OCI-LY7 (cell line): ENCODE measurements at regions of chr20 and their contacts with region 1.

Region 1: GRCh38 chr20:47677635-47678453 is 107.4 kb downstream of the SULF2 start:
- DNase-seq: peak; percentile 72
- H3K4me3 ChIP-seq: no peak overlapping the region
- H3K27ac ChIP-seq: no peak overlapping the region
- H3K4me1 ChIP-seq: no peaks in the 10 kb centered on the region
- CTCF ChIP-seq: peak; percentile 90

Region 2: GRCh38 chr20:47642624-47643023 is 35.2 kb before region 1 on chr20:
- CTCF ChIA-PET with region 1: no interaction called
- POLR2A ChIA-PET with region 1: no interaction called
- intact Hi-C with region 1: no loop called
- DNase-seq: no peak
- H3K4me3 ChIP-seq: no peak overlapping the region
- H3K27ac ChIP-seq: no peak overlapping the region
- H3K4me1 ChIP-seq: no peaks in the 10 kb centered on the region
- CTCF ChIP-seq: no peak

Region 3: DNA sequence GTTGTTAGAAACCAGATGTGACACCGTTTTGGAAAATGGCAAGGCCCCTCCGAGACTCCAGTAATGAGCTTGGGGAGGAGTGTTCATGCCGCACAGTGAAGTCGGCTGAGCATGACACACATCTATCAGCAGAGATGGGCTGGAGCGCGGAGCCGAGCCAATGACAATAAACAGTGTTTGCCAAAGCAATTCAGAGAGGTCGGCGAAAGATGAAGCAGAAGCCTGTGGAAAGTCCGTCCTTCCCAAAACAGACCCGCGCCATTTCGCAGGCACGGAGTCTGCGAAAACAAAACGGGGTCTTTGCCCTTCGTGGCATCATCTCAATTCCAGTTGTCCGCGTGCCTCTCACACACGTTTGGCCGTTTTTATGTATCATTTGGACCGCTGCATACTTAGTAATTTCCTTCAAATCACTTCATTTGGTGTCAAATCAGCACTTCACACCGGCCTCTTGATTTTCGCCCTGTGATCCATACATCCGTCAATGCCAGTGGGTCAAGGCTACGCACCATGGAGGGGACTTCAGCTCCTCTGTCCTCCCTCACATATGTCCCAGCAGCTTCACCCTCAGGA is 36.1 kb after region 1 on chr20:
- CTCF ChIA-PET with region 1: no interaction called
- POLR2A ChIA-PET with region 1: interaction called, 5 read pairs
- intact Hi-C with region 1: loop called (anchors 1 kb)
- DNase-seq: no peak
- H3K4me3 ChIP-seq: no peak overlapping the region
- H3K27ac ChIP-seq: no peak overlapping the region
- H3K4me1 ChIP-seq: no peaks in the 10 kb centered on the region
- CTCF ChIP-seq: no peak